Prostate gland (tissue), 2 donors: ENCODE measurements at regions of chr1 and their contacts with region 1.

Region 1: GRCh38 chr1:61426254-61426653 is 298.7 kb downstream of the TM2D1 start:
- DNase-seq: no peak
- H3K4me3 ChIP-seq: no peak overlapping the region
- H3K27ac ChIP-seq: no peak overlapping the region
- H3K4me1 ChIP-seq: no peaks in the 10 kb centered on the region
- H3K27me3 ChIP-seq: no peaks in the 10 kb centered on the region
- CTCF ChIP-seq: no peak
- POLR2A ChIP-seq: no peak

Region 2: GRCh38 chr1:61403679-61404596 is 22.3 kb before region 1 on chr1:
- intact Hi-C with region 1: loop called (anchors 2 kb)
- DNase-seq: no peak
- H3K4me3 ChIP-seq: no peak overlapping the region
- H3K27ac ChIP-seq: no peak overlapping the region
- H3K4me1 ChIP-seq: no peaks in the 10 kb centered on the region
- H3K27me3 ChIP-seq: no peaks in the 10 kb centered on the region
- CTCF ChIP-seq: no peak
- POLR2A ChIP-seq: no peak

Region 3: DNA sequence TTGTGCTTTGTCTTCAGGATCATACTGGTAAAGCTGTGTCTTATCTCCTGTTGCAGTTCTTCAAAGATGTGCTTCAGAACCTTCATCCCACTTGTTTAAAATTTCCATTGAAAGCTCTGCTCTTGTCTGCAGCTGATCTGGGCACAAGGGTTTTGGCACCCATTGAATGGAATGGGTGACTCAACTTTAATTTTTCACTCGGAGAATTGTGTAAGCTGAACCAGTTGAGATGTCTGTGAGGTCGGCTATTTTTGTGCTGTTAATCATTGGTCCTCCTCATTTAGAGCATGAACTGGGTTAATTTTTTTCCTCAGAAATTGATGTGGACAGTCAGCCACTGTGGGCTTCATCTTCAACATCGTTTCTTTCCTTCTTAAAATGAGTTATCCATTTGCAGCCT is 46.6 kb after region 1 on chr1:
- intact Hi-C with region 1: no loop called
- DNase-seq: no peak
- H3K4me3 ChIP-seq: no peak overlapping the region
- H3K27ac ChIP-seq: no peak overlapping the region
- H3K4me1 ChIP-seq: no peaks in the 10 kb centered on the region
- H3K27me3 ChIP-seq: no peaks in the 10 kb centered on the region
- CTCF ChIP-seq: no peak
- POLR2A ChIP-seq: no peak

Region 4: GRCh38 chr1:61496476-61496893 is 70.2 kb after region 1 on chr1:
- intact Hi-C with region 1: no loop called
- DNase-seq: no peak
- H3K4me3 ChIP-seq: no peak overlapping the region
- H3K27ac ChIP-seq: no peak overlapping the region
- H3K4me1 ChIP-seq: no peaks in the 10 kb centered on the region
- H3K27me3 ChIP-seq: no peaks in the 10 kb centered on the region
- CTCF ChIP-seq: no peak
- POLR2A ChIP-seq: no peak